Activated T-helper 2 cell treated with anti-CD3 and anti-CD28 coated beads, Interferon-gamma antibody, Interleukin-2, Interleukin-4, amounts not matched to agents 10 μg/mL and 5 μg/mL and 100 μg/mL, durations not matched to agents 14 hours and 24 hours and 36 hours (primary cell): ENCODE measurements at regions of chrX and their contacts with region 1.

Region 1: GRCh38 chrX:72018277-72019112 is 107.8 kb downstream of the NHSL2 start:
- DNase-seq: peak; percentile 71
- H3K4me3 Mint-ChIP-seq: no peak overlapping the region
- H3K27ac Mint-ChIP-seq: no peak overlapping the region
- H3K4me1 Mint-ChIP-seq: peaks cover 16% of the 10 kb centered on the region
- H3K27me3 Mint-ChIP-seq: peaks cover 53% of the 10 kb centered on the region

Region 2: GRCh38 chrX:70694339-70695122 is 1324.0 kb before region 1 on chrX:
- intact Hi-C with region 1: no loop called
- DNase-seq: no peak
- H3K4me3 Mint-ChIP-seq: no peak overlapping the region
- H3K27ac Mint-ChIP-seq: no peak overlapping the region
- H3K4me1 Mint-ChIP-seq: peaks cover 3% of the 10 kb centered on the region
- H3K27me3 Mint-ChIP-seq: no peaks in the 10 kb centered on the region

Region 3: DNA sequence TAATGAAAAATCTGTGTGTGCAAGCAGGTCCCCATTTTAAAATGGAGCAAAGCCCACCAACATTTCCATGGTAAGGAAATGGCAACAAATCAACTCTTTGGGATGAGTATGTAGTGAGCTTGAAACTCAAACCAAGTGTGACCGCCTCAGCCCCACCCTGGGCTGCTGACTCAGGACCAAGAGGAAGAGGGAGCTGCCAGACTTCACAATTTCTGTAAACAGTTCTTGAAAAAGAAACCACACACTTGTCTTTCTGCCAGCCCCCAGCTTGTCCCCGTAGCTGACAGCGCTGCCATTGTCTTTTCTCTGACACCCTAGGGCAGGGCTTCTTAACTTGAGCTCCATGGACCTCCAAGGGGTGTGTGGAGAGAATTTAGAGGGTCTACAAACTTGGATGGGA is 102.9 kb after region 1 on chrX:
- intact Hi-C with region 1: loop called (anchors 1 kb)
- DNase-seq: no peak
- H3K4me3 Mint-ChIP-seq: no peak overlapping the region
- H3K27ac Mint-ChIP-seq: no peak overlapping the region
- H3K4me1 Mint-ChIP-seq: peaks cover 19% of the 10 kb centered on the region
- H3K27me3 Mint-ChIP-seq: peaks cover 26% of the 10 kb centered on the region

Region 4: GRCh38 chrX:72126539-72127140 is 108.1 kb after region 1 on chrX:
- intact Hi-C with region 1: loop called (anchors 1 kb)
- DNase-seq: peak; percentile 66
- H3K4me3 Mint-ChIP-seq: no peak overlapping the region
- H3K27ac Mint-ChIP-seq: no peak overlapping the region
- H3K4me1 Mint-ChIP-seq: peaks cover 19% of the 10 kb centered on the region
- H3K27me3 Mint-ChIP-seq: peaks cover 40% of the 10 kb centered on the region

Region 5: DNA sequence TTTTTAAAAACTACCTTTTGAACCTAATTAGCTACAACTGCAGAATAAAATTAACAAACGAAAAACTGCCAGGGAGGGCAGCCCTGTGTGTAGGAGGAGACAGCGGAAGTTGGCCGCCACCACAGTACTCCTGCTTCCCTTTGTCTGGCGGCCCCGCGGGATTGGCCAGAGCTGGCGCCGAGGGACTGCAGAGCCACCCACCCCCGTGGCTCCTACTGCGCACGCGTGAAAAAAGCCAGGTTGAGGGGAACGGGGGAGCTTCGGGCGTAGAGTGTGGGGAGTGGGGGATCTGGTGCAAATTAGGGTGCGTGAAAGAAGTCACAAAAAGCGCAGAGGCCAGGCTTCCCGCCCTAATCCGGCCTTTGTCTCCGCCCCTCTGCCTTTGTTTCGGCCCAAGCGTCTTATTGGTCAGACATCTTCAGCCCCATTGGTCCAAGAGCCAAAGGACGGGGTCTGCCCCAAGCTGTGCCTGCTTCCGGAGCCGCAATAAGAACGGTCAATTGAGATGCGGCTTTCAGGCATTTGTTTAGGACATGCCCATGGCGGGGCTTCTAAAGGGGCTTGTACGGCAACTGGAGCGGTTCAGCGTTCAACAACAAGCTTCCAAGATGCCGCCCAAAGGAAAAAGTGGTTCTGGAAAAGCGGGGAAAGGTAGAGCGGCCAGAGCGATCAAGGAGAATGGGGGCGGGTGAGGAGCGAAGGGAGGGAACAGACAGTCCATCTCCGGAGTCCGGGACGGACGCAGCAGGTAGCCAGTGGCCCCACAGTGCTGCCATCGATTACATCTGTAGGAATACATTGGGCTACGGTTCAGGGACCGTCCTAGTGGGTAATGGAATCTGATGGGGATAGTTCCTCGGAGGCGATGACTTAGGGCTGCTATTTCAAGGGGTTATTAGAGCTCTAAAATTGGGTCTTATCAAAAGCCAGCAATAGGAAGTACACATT is 163.0 kb after region 1 on chrX and contains the start of gene PIN4:
- intact Hi-C with region 1: loop called (anchors 2 kb)
- DNase-seq: peak; percentile 77
- H3K4me3 Mint-ChIP-seq: no peak within 1 kb of the TSS
- H3K27ac Mint-ChIP-seq: no peak within 1 kb of the TSS
- H3K4me1 Mint-ChIP-seq: peaks cover 2% of the 10 kb centered on the region
- H3K27me3 Mint-ChIP-seq: no peaks in the 10 kb centered on the region
- total RNA-seq, gene PIN4: 13.5 and 16.8 TPM in 2 replicates